ENCODE measurements at regions of chr11 and their contacts with region 1.

Region 1: DNA sequence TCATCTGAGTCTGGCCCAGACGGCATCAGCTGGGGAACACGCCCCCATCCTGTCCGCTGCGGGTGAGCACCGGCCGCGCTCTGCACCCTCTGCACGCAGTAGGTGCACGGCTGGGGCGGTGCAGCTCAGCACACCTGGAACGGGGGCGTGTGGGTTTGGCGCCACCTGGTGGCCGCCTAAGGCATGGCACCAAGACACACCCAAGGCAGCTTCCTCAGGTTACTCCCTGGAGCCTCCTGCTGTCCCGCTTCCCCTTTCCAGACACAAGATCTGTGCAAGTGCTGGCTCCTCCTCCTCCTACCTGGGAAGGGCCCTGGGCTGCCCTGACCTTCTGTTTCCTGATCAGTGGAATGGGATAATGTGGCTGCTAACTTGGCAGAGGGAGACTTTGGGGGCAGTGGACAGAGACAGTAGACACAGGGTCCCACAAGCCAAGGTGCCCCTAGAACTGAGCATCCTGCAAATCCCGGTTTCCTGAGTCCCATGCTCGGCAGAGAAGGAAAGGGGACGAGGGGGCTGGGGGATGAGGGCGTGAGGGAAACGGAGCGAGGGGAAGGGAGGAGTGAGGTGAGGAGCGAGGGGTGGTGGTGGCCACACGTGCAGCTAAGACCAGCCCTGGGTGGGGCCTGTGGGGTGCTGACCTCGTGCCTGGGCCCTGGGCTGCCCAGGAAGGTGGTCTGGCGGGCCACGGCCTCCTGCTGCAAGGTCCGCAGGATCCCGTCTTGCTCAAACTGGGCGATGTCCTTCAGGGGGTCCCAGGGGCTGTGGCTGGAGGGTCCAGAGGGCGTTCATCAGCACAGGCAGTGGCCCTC is 34.8 kb upstream of the CARS1 start:
- DNase-seq: peak; percentile 93
- H3K4me3 ChIP-seq: no peak overlapping the region; a peak in 1 of 4 replicates
- H3K27ac ChIP-seq: no peak overlapping the region
- H3K4me1 ChIP-seq: peaks cover 0 to 9% of the 10 kb centered on the region in 2 experiments; a peak in 2 of 4 replicates
- H3K27me3 ChIP-seq: no peaks in the 10 kb centered on the region
- CTCF ChIP-seq: peak; percentile 95
- EP300 ChIP-seq: no peak
- RAD21 ChIP-seq: peak; percentile 84

Region 2: GRCh38 chr11:2930704-2931428 is 161.1 kb before region 1 on chr11:
- CTCF ChIA-PET with region 1: interaction called, 27 read pairs
- POLR2A ChIA-PET with region 1: no interaction called
- DNase-seq: peak; percentile 84
- H3K4me3 ChIP-seq: peak overlapping the region; percentile 46 to 66; a peak in 3 of 4 replicates
- H3K27ac ChIP-seq: peak overlapping the region in 1 of 2 experiments; percentile 60; a peak in 1 of 4 replicates
- H3K4me1 ChIP-seq: peaks cover 0 to 14% of the 10 kb centered on the region in 2 experiments; a peak in 2 of 4 replicates
- H3K27me3 ChIP-seq: no peaks in the 10 kb centered on the region
- CTCF ChIP-seq: peak; percentile 55
- EP300 ChIP-seq: no peak
- RAD21 ChIP-seq: peak; percentile 69

Region 3: DNA sequence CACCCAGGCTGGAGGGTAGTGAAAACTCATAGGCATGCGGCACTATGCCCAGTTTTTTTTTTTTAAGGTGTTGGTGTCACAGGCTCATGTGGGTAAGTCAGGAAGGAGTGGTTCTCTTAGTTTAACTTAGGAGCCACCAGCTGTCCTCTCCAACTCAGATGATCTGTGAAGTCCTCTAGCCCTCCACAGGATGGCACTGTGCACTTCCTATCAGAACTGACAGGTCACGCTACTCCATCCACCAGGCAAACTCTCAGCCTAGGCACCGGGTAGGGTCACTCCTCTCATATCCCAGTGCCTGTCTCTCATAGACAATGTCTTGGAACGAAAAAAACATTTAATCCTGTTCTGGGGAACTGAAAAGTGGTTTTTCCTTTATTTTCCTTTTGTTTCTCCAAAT is 116.4 kb before region 1 on chr11:
- CTCF ChIA-PET with region 1: interaction called, 29 read pairs
- POLR2A ChIA-PET with region 1: no interaction called
- DNase-seq: peak; percentile 44
- H3K4me3 ChIP-seq: no peak overlapping the region
- H3K27ac ChIP-seq: no peak overlapping the region
- H3K4me1 ChIP-seq: no peaks in the 10 kb centered on the region
- H3K27me3 ChIP-seq: no peaks in the 10 kb centered on the region
- CTCF ChIP-seq: peak; percentile 53
- EP300 ChIP-seq: no peak
- RAD21 ChIP-seq: peak; percentile 70

Region 4: GRCh38 chr11:3021125-3021524 is 70.9 kb before region 1 on chr11:
- CTCF ChIA-PET with region 1: interaction called, 19 read pairs
- POLR2A ChIA-PET with region 1: no interaction called
- DNase-seq: peak; percentile 76
- H3K4me3 ChIP-seq: no peak overlapping the region; a peak in 1 of 4 replicates
- H3K27ac ChIP-seq: no peak overlapping the region; a peak in 1 of 4 replicates
- H3K4me1 ChIP-seq: peaks cover 0 to 9% of the 10 kb centered on the region in 2 experiments; a peak in 2 of 4 replicates
- H3K27me3 ChIP-seq: no peaks in the 10 kb centered on the region
- CTCF ChIP-seq: peak; percentile 61
- EP300 ChIP-seq: no peak
- RAD21 ChIP-seq: peak; percentile 75

Region 5: DNA sequence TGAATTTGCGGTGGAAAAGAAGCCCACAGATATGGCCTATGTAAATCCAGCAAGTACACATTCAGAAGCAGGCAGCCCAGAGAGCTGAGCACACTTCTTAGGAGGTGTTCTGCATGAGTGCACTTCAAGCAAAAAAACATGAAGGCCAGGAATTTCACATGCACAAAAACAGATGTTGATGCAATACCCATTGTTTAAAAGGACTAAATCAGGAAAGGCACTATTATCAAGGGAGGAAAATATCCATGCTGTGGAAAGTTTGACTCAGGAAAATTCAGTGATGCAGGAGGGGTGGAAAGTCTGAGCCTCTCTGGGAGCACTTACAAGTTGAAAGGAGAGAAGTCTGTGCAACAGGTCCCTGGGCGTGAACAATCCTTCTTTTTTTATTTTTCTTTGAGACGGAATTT is 19.0 kb before region 1 on chr11:
- CTCF ChIA-PET with region 1: interaction called, 68 read pairs
- POLR2A ChIA-PET with region 1: no interaction called
- DNase-seq: no peak
- H3K4me3 ChIP-seq: no peak overlapping the region
- H3K27ac ChIP-seq: no peak overlapping the region
- H3K4me1 ChIP-seq: peaks cover 0 to 9% of the 10 kb centered on the region in 2 experiments; a peak in 1 of 4 replicates
- H3K27me3 ChIP-seq: no peaks in the 10 kb centered on the region
- CTCF ChIP-seq: no peak
- EP300 ChIP-seq: no peak
- RAD21 ChIP-seq: no peak

Region 6: DNA sequence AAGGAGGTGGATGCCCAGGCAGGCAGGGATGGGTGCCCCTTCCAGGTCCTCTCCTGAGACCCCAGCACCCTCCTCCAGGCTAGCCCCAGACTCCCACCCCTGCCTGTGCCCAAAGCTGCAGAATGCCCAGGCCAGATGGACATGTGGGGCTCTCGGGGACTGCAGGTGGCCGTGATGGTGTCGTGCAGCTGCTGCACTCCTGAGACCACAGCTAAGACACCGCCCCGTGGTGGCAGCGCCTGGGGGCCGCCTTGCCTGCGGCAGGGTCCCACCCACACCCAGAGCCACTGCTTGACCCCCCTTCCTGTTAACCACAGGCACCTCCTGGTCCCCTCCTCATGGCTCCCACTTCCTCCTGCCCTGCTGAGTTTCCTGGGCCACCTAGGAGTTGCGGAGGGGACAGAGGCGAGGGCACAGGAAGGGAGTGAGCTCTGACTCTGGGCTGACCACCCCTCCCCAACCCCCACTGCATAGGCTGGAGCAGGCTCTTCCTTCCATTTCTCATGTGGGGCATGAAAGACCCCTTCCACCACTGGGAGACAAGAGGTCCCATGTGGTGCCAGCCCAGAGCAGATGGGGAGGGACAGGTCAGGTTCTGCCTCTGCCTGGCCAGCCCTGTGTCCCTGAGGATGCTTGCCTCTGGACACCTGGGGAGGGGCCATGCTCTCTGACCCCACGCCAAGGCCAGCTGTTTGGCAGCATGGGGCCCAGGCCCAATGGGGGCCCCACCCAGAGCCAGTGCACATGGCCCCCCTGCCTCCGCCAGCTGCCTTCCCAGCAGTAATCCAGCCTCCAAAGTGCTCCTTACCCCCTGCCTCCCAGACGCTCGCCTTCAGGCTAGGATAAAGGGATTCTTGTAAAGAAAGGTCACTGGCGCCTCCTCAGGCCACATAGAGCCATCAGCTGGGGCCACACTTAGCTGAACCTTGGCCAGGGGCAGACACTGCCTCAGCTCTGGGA is 43.8 kb after region 1 on chr11:
- CTCF ChIA-PET with region 1: interaction called, 11 read pairs
- POLR2A ChIA-PET with region 1: no interaction called
- DNase-seq: no peak
- H3K4me3 ChIP-seq: no peak overlapping the region
- H3K27ac ChIP-seq: no peak overlapping the region
- H3K4me1 ChIP-seq: peaks cover 0 to 14% of the 10 kb centered on the region in 2 experiments; a peak in 1 of 4 replicates
- H3K27me3 ChIP-seq: no peaks in the 10 kb centered on the region
- CTCF ChIP-seq: no peak
- EP300 ChIP-seq: no peak
- RAD21 ChIP-seq: no peak

Region 7: DNA sequence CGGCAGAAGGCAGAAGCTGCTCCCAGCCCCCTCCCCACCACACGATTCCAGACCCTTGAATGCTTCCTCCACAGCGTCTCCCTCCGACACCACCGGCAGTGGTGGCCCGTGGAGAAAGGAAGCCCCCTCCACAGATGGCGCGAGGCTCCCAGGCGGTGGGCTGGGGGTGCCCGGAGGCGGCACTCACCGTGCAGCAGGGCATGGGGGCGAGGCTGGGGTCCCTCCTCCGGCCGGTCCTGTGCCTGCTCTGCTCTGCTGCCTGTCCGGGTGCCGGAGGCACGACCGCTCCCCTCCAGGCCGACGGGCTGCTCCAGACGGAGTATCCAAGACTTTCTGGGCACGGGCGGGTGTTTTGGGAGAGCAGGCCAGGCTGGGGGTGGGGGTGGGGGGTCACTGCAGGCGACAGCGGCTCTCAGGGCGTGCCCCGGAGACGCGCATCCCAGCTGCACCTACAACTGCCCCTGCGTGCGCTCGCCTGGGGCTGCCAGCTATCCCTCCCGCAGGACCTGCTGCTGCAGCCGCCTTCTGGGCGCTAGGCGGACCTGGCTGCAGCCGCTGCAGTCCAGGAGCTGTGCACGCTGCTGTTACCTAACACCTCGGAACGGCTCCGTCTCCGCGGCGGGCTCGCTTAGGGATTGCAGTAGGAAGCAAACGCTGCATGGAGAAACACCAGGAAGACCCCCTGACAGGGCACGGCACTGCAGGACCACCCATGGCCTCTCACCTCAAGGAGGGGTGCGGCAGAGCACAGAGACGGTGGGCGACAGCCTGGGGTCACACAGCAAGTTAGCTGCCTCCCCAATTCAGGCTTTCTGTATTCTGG is 111.4 kb after region 1 on chr11:
- CTCF ChIA-PET with region 1: interaction called, 10 read pairs
- POLR2A ChIA-PET with region 1: no interaction called
- DNase-seq: peak; percentile 73
- H3K4me3 ChIP-seq: no peak overlapping the region; a peak in 1 of 4 replicates
- H3K27ac ChIP-seq: no peak overlapping the region
- H3K4me1 ChIP-seq: peaks cover 0 to 22% of the 10 kb centered on the region in 2 experiments; a peak in 1 of 4 replicates
- H3K27me3 ChIP-seq: peaks cover 25% of the 10 kb centered on the region
- CTCF ChIP-seq: no peak
- EP300 ChIP-seq: no peak
- RAD21 ChIP-seq: no peak

Measured in SK-N-SH (cell line).